Common myeloid progenitor, CD34-positive (primary cell): ENCODE measurements at regions of chr6 and their contacts with region 1.

Region 1: DNA sequence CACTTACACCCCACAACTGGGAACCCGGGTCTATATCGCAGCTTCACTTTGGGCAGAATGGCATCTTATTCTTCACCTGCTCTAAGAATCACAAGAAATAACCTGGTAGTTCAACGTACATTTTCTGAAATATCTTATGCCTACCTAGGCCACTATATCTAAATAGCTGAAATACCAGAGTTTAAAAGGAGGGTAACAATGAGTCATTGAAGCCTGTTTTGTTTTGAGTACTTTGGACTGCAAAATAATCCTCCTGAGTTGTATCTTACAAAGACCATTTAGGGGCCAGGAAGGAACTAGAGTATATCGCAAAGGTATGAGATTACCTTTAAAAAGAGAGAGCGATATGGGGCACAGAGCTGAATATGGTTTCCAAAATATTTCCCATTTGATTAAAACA is 96.7 kb upstream of the NUP153 start:
- DNase-seq: no peak
- H3K4me3 ChIP-seq: no peak overlapping the region
- H3K27ac ChIP-seq: no peak overlapping the region
- H3K4me1 ChIP-seq: peaks cover 0 to under 1% (median 0%) of the 10 kb centered on the region in 4 experiments
- H3K27me3 ChIP-seq: no peaks in the 10 kb centered on the region

Region 2: GRCh38 chr6:17156112-17156921 is 647.1 kb before region 1 on chr6:
- CTCF ChIA-PET with region 1: interaction called, 12 read pairs
- POLR2A ChIA-PET with region 1: no interaction called
- DNase-seq: peak; percentile 82 to 90 (median 85)
- H3K4me3 ChIP-seq: no peak overlapping the region
- H3K27ac ChIP-seq: no peak overlapping the region
- H3K4me1 ChIP-seq: no peaks in the 10 kb centered on the region
- H3K27me3 ChIP-seq: peaks cover 0 to 2% (median 0%) of the 10 kb centered on the region in 5 experiments

Region 3: DNA sequence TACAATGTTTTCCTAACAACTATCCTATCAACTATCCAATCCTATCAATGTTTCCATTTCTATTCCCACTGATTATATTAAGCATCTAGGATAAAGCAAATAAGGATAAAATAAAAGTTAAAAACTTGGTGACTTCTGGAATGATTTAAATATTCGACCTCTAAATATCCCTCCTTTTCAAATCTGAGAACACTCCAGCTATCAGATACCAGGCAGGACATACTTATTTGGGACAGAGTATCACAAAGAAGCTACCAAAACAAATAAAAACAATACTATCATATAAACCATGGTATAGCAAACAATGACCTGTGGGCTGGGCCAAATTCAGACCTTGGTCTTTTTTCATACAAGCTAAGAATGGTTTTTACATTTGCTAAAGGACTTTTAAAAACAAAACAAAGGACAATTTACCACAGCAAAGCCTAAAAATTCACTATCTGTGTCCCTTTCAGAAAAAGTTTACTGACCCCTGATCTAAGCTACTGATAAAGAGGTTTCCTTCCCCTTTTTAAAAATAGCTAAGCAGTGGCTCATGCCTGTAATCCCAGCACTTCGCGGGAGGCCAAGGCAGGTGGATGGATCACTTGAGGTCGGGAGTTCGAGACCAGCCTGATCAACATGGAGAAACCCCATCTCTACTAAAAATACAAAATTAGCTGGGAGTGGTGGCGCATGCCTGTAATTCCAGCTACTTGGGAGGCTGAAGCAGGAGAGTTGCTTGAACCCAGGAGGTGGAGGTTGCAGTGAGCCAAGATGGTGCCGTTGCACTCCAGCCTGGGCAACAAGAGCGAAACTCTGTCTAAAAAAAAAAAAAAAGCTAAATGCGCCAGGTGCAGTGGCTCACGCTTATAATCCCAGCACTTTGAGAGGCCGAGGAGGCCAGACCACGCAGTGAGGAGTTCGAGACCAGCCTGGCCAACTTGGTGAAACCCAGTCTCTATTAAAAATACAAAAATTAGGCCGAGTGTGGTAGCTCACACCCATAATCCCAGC is 102.7 kb before region 1 on chr6:
- CTCF ChIA-PET with region 1: interaction called, 10 read pairs
- POLR2A ChIA-PET with region 1: no interaction called
- DNase-seq: peak; percentile 34 to 74 (median 64)
- H3K4me3 ChIP-seq: peak overlapping the region in 2 of 7 experiments; percentile 47 to 57
- H3K27ac ChIP-seq: peak overlapping the region; percentile 19 to 73
- H3K4me1 ChIP-seq: peaks cover 30 to 66% (median 58%) of the 10 kb centered on the region in 4 experiments
- H3K27me3 ChIP-seq: no peaks in the 10 kb centered on the region

Region 4: DNA sequence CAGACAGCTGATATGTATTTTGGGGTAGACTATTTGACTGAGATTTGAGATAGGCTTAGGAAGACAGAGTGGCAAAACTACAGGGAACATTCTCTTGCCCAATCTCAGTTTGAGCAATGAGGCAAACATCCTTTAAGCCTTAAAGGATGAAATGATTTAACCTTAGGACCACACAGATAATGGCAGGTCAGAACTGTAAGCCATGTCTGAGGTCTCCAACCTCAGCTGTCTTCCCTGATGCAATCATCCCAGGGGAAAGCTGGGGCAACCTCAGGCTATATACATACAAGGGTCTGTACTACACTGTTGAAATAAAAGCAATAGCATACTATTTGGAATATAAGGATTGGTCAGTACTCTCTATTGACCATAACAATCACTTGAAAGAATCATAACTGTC is 12.9 kb before region 1 on chr6:
- CTCF ChIA-PET with region 1: interaction called, 14 read pairs
- POLR2A ChIA-PET with region 1: no interaction called
- DNase-seq: no peak
- H3K4me3 ChIP-seq: no peak overlapping the region
- H3K27ac ChIP-seq: no peak overlapping the region
- H3K4me1 ChIP-seq: no peaks in the 10 kb centered on the region
- H3K27me3 ChIP-seq: no peaks in the 10 kb centered on the region

Region 5: DNA sequence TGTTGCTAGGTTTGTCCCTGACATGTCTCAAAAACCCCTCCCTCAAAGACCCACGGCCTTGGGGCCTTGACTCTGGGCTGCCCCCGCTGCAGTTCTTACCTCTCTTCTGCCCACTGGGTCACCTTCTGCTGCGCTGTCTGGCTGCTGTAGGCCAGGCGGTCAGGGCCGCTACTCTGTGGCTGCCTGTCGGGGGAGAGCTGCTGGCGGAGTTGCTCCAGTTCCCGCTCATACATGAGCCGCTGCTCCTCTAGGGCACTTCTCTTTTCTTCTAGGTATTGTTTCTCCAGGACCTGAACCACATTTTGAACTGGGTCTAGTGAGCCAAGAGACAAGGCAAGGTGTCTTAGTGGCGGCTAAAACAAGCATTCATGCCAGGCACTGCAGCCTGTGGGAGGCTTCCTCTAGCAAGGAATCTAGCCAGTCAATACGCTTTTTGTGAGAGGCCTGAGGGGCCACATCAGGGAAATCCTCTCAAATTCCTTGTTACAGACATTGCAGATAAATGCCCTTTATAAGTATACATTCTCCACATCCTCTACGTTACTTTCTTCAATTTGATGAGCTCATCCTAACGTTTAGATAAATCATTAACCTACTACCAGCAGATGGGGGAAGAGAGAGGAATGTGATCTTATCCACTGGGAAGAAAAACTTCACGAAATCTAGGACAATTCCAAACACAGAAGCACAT is 13.7 kb after region 1 on chr6:
- CTCF ChIA-PET with region 1: interaction called, 15 read pairs
- POLR2A ChIA-PET with region 1: no interaction called
- DNase-seq: no peak
- H3K4me3 ChIP-seq: no peak overlapping the region
- H3K27ac ChIP-seq: no peak overlapping the region
- H3K4me1 ChIP-seq: peaks cover 0 to 5% (median 0%) of the 10 kb centered on the region in 4 experiments
- H3K27me3 ChIP-seq: no peaks in the 10 kb centered on the region